ENCODE measurements at regions of chr1 and their contacts with region 1.

Region 1: GRCh38 chr1:12275369-12275768 is 45.5 kb downstream of the VPS13D start:
- DNase-seq: peak; percentile 60 to 67 (median 65)
- ATAC-seq: peak; percentile 88
- H3K4me3 ChIP-seq: no peak overlapping the region
- H3K27ac ChIP-seq: no peak overlapping the region
- H3K4me1 ChIP-seq: no peaks in the 10 kb centered on the region
- H3K27me3 ChIP-seq: no peaks in the 10 kb centered on the region; a peak in 1 of 5 replicates
- CTCF ChIP-seq: peak; percentile 81 to 89 (median 86)
- EP300 ChIP-seq: no peak
- POLR2A ChIP-seq: no peak
- RAD21 ChIP-seq: peak; percentile 21 to 59

Region 2: GRCh38 chr1:12208764-12209494 is 66.4 kb before region 1 on chr1:
- CTCF ChIA-PET with region 1: no interaction called
- POLR2A ChIA-PET with region 1: no interaction called
- in situ Hi-C with region 1: no loop called
- intact Hi-C with region 1: loop called (anchors 2 kb)
- DNase-seq: peak; percentile 85 to 90 (median 87)
- ATAC-seq: peak; percentile 91
- H3K4me3 ChIP-seq: no peak overlapping the region
- H3K27ac ChIP-seq: no peak overlapping the region
- H3K4me1 ChIP-seq: peaks cover 3 to 17% of the 10 kb centered on the region in 2 experiments; a peak in 4 of 5 replicates
- H3K27me3 ChIP-seq: no peaks in the 10 kb centered on the region
- CTCF ChIP-seq: peak; percentile 94 to 97 (median 96)
- EP300 ChIP-seq: no peak; the same call in 1 of the 2 replicates
- POLR2A ChIP-seq: peak; percentile 66; the same call in 1 of the 2 replicates
- RAD21 ChIP-seq: peak; percentile 98 to 99

Region 3: GRCh38 chr1:12258272-12258671 is 17.1 kb before region 1 on chr1:
- CTCF ChIA-PET with region 1: no interaction called
- POLR2A ChIA-PET with region 1: interaction called, 19 read pairs
- in situ Hi-C with region 1: no loop called
- intact Hi-C with region 1: no loop called
- DNase-seq: no peak
- ATAC-seq: no peak
- H3K4me3 ChIP-seq: no peak overlapping the region
- H3K27ac ChIP-seq: no peak overlapping the region
- H3K4me1 ChIP-seq: no peaks in the 10 kb centered on the region
- H3K27me3 ChIP-seq: no peaks in the 10 kb centered on the region
- CTCF ChIP-seq: no peak
- EP300 ChIP-seq: no peak
- POLR2A ChIP-seq: no peak
- RAD21 ChIP-seq: no peak

Region 4: GRCh38 chr1:12658531-12659453 is 383.4 kb after region 1 on chr1:
- CTCF ChIA-PET with region 1: interaction called, 11 read pairs
- POLR2A ChIA-PET with region 1: no interaction called
- in situ Hi-C with region 1: no loop called
- intact Hi-C with region 1: loop called (anchors 2 kb)
- DNase-seq: peak; percentile 94 to 98 (median 96)
- ATAC-seq: peak; percentile 74
- H3K4me3 ChIP-seq: no peak overlapping the region
- H3K27ac ChIP-seq: no peak overlapping the region
- H3K4me1 ChIP-seq: peaks cover 10 to 18% of the 10 kb centered on the region in 2 experiments
- H3K27me3 ChIP-seq: no peaks in the 10 kb centered on the region
- CTCF ChIP-seq: peak; percentile 90 to 98 (median 98)
- EP300 ChIP-seq: no peak
- POLR2A ChIP-seq: no peak
- RAD21 ChIP-seq: peak; percentile 90 to 97